PC-9 (cell line): ENCODE measurements at regions of chr6 and their contacts with region 1.

Region 1: DNA sequence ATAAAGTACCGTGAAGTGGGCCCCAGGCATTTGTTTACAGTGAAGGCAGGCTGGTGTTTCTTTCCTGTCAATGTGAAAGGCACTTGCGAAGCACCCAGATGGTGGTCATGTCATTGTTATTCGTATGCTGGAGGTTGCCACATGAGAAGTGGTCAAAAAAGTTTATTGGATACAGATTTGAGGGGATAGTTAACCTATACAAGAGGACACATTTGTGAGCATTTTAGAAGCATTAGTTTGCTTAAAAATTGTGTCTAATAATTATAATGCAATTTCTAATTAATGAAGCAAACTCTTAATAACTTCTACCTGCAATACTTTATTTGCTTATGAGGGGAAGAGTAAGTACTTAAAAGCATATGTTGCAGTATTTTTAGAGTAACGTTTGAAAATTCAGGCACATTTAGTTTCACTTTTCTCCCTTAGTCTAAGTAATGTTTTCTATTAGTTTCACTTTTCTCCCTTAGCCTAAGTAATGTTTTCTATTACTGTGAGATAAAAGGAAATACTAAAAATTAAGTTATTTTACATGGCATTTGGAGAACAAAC is 120.7 kb upstream of the CLDN20 start:
- DNase-seq: no peak
- H3K4me3 ChIP-seq: no peak overlapping the region
- H3K27ac ChIP-seq: no peak overlapping the region
- H3K4me1 ChIP-seq: peaks cover 5% of the 10 kb centered on the region
- H3K27me3 ChIP-seq: no peaks in the 10 kb centered on the region
- CTCF ChIP-seq: no peak

Region 2: GRCh38 chr6:155062866-155063341 is 80.2 kb before region 1 on chr6:
- CTCF ChIA-PET with region 1: interaction called, 12 read pairs
- POLR2A ChIA-PET with region 1: no interaction called
- intact Hi-C with region 1: no loop called
- DNase-seq: peak in 1 of 2 experiments; percentile 74
- H3K4me3 ChIP-seq: no peak overlapping the region
- H3K27ac ChIP-seq: peak overlapping the region; percentile 44; the same call in 1 of the 2 replicates
- H3K4me1 ChIP-seq: peaks cover 12% of the 10 kb centered on the region
- H3K27me3 ChIP-seq: no peaks in the 10 kb centered on the region
- CTCF ChIP-seq: no peak